CD4-positive, alpha-beta memory T cell (primary cell): ENCODE measurements at regions of chr1 and their contacts with region 1.

Region 1: GRCh38 chr1:200971955-200972711 is 51.4 kb downstream of the KIF21B start:
- DNase-seq: peak; percentile 51 to 60 (median 56)
- H3K4me3 ChIP-seq: no peak overlapping the region
- H3K4me3 Mint-ChIP-seq: no peak overlapping the region
- H3K27ac ChIP-seq: no peak overlapping the region
- H3K27ac Mint-ChIP-seq: peak overlapping the region in 1 of 7 donors; percentile 38
- H3K4me1 ChIP-seq: no peaks in the 10 kb centered on the region
- H3K4me1 Mint-ChIP-seq: peaks cover 0 to 2% (median 0%) of the 10 kb centered on the region in 4 donors
- H3K27me3 ChIP-seq: no peaks in the 10 kb centered on the region
- H3K27me3 Mint-ChIP-seq: no peaks in the 10 kb centered on the region

Region 2: GRCh38 chr1:200890818-200891773 is 81.0 kb before region 1 on chr1:
- CTCF ChIA-PET with region 1: interaction called, 11 read pairs
- POLR2A ChIA-PET with region 1: interaction called, 3 read pairs
- intact Hi-C with region 1: loop called (anchors 10 kb)
- DNase-seq: no peak
- H3K4me3 ChIP-seq: peak overlapping the region; percentile 24 to 55
- H3K4me3 Mint-ChIP-seq: peak overlapping the region; percentile 59 to 84 (median 76)
- H3K27ac ChIP-seq: peak overlapping the region; percentile 28
- H3K27ac Mint-ChIP-seq: peak overlapping the region in 5 of 7 donors; percentile 42 to 88 (median 69)
- H3K4me1 ChIP-seq: peaks cover 59% of the 10 kb centered on the region
- H3K4me1 Mint-ChIP-seq: peaks cover 33 to 58% (median 45%) of the 10 kb centered on the region in 4 donors
- H3K27me3 ChIP-seq: no peaks in the 10 kb centered on the region
- H3K27me3 Mint-ChIP-seq: peaks cover 0 to 8% of the 10 kb centered on the region in 2 donors

Region 3: GRCh38 chr1:200992382-200993048 is 20.4 kb after region 1 on chr1:
- CTCF ChIA-PET with region 1: interaction called, 18 read pairs
- POLR2A ChIA-PET with region 1: no interaction called
- intact Hi-C with region 1: no loop called
- DNase-seq: peak in 1 of 5 donors; percentile 25
- H3K4me3 ChIP-seq: no peak overlapping the region
- H3K4me3 Mint-ChIP-seq: no peak overlapping the region
- H3K27ac ChIP-seq: no peak overlapping the region
- H3K27ac Mint-ChIP-seq: peak overlapping the region in 2 of 7 donors; percentile 10 to 87
- H3K4me1 ChIP-seq: no peaks in the 10 kb centered on the region
- H3K4me1 Mint-ChIP-seq: peaks cover 0 to 2% (median under 1%) of the 10 kb centered on the region in 4 donors
- H3K27me3 ChIP-seq: no peaks in the 10 kb centered on the region
- H3K27me3 Mint-ChIP-seq: no peaks in the 10 kb centered on the region

Region 4: DNA sequence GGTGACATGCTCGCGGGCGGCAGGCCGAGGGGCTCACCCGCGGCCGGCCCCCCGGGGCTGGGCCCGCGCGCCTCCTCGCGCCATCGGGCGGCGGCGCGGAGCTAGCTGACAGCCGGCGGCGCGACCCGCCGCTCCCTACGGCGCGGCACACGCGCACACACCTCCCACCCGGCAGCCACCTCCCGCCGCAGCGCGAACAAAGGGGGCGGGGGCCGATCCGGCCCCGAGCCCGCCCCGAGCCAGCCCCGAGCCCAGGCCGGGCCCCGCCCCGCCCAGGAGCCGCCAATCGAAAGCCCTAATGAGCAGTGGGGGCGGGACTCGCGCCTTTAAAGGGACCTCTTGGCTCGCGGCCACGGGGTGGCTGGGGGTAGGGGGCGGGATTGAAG is 51.4 kb after region 1 on chr1 and contains the start of gene KIF21B:
- CTCF ChIA-PET with region 1: interaction called, 95 read pairs
- POLR2A ChIA-PET with region 1: interaction called, 12 read pairs
- intact Hi-C with region 1: no loop called
- DNase-seq: peak; percentile 89 to 92 (median 92)
- H3K4me3 ChIP-seq: peak within 1 kb of the TSS; percentile 67 to 86
- H3K4me3 Mint-ChIP-seq: peak within 1 kb of the TSS; percentile 92 to 98 (median 96)
- H3K27ac ChIP-seq: peak within 1 kb of the TSS; percentile 69
- H3K27ac Mint-ChIP-seq: peak within 1 kb of the TSS; percentile 95 to 100 (median 97)
- H3K4me1 ChIP-seq: peaks cover 70% of the 10 kb centered on the region
- H3K4me1 Mint-ChIP-seq: peaks cover 54 to 78% (median 64%) of the 10 kb centered on the region in 4 donors
- H3K27me3 ChIP-seq: no peaks in the 10 kb centered on the region
- H3K27me3 Mint-ChIP-seq: no peaks in the 10 kb centered on the region
- total RNA-seq, gene KIF21B: 90.3 to 94.7 TPM

Region 5: GRCh38 chr1:201050515-201051277 is 78.6 kb after region 1 on chr1:
- CTCF ChIA-PET with region 1: interaction called, 488 read pairs
- POLR2A ChIA-PET with region 1: no interaction called
- intact Hi-C with region 1: no loop called
- DNase-seq: no peak
- H3K4me3 ChIP-seq: no peak overlapping the region
- H3K4me3 Mint-ChIP-seq: no peak overlapping the region
- H3K27ac ChIP-seq: no peak overlapping the region
- H3K27ac Mint-ChIP-seq: no peak overlapping the region
- H3K4me1 ChIP-seq: no peaks in the 10 kb centered on the region
- H3K4me1 Mint-ChIP-seq: no peaks in the 10 kb centered on the region
- H3K27me3 ChIP-seq: no peaks in the 10 kb centered on the region
- H3K27me3 Mint-ChIP-seq: no peaks in the 10 kb centered on the region

Region 6: GRCh38 chr1:201119206-201120197 is 147.4 kb after region 1 on chr1:
- CTCF ChIA-PET with region 1: interaction called, 45 read pairs
- POLR2A ChIA-PET with region 1: interaction called, 4 read pairs
- intact Hi-C with region 1: loop called (anchors 1 kb)
- DNase-seq: peak; percentile 35 to 58 (median 42)
- H3K4me3 ChIP-seq: no peak overlapping the region
- H3K4me3 Mint-ChIP-seq: peak overlapping the region in 2 of 8 donors; percentile 5 to 26
- H3K27ac ChIP-seq: no peak overlapping the region
- H3K27ac Mint-ChIP-seq: no peak overlapping the region
- H3K4me1 ChIP-seq: peaks cover 19% of the 10 kb centered on the region
- H3K4me1 Mint-ChIP-seq: peaks cover under 1 to 19% (median 10%) of the 10 kb centered on the region in 4 donors
- H3K27me3 ChIP-seq: peaks cover 4% of the 10 kb centered on the region
- H3K27me3 Mint-ChIP-seq: peaks cover 0 to 7% of the 10 kb centered on the region in 2 donors